ENCODE measurements at regions of chr12 and their contacts with region 1.

Region 1: DNA sequence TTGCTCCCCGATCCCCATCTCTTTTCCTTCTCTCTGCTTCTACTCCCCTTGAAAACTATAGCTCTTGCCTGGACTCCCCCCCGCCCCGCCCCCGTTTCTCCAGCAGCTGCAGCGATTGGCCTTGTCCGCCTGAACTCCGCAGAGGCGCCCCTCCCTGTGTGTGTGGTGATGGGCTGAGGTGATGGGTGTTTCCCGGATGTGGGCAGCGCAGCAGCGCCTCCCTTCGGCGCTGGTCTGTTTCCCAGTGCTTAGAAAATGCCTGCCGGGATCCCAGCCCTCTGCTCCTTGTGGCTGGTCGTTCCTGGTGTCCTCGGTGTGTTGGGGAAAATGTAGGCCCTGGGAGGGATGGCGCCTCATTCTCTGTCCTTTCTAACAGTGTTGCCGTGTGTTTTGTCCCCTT is 43.3 kb downstream of the GALNT8 start:
- DNase-seq: no peak
- H3K4me3 Mint-ChIP-seq: no peak overlapping the region
- H3K27ac Mint-ChIP-seq: no peak overlapping the region
- H3K4me1 Mint-ChIP-seq: no peaks in the 10 kb centered on the region
- H3K27me3 Mint-ChIP-seq: peaks cover 34% of the 10 kb centered on the region
- CTCF ChIP-seq: no peak

Region 2: DNA sequence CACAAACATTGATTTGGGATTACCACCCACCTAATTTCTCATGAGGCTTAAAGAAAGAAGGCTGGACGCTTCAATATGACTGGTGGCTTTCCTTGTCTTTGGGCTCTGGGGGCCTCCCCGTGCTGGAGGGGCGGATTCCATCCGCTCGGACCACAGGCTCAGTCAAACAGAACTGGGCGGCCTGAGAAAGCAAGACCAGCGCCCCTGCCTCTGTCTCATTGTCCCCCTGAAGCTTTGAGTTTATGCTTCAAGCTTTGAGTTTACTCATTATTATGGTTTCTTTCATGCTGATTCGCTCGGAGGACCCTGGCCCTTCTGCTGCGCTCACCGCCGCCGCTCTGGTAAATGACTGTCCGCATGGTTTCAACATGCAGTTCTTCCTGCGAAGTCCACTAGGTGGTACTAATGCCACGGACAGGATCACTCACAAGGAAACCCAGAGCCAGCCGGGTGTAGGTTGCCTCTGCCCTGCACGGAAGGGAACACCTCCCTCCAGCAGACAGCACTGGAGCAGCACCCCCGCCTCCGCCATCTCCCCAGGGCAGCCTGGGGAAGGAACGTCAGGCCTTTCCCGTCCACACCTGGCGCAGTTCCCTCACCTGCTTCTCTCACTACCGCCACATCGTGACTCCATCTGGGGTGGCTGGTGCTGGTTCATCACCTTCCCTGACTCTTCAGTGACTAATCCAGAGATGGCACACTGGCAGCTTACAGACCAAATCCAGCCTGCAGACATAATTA is 455.8 kb before region 1 on chr12:
- CTCF ChIA-PET with region 1: interaction called, 3 read pairs
- POLR2A ChIA-PET with region 1: no interaction called
- intact Hi-C with region 1: loop called (anchors 1 kb)
- DNase-seq: peak; percentile 88
- H3K4me3 Mint-ChIP-seq: peak overlapping the region; percentile 60
- H3K27ac Mint-ChIP-seq: peak overlapping the region; percentile 36
- H3K4me1 Mint-ChIP-seq: peaks cover 10% of the 10 kb centered on the region
- H3K27me3 Mint-ChIP-seq: peaks cover 12% of the 10 kb centered on the region
- CTCF ChIP-seq: peak; percentile 78

Region 3: GRCh38 chr12:4421590-4422031 is 341.9 kb before region 1 on chr12:
- CTCF ChIA-PET with region 1: interaction called, 4 read pairs
- POLR2A ChIA-PET with region 1: no interaction called
- intact Hi-C with region 1: loop called (anchors 1 kb)
- DNase-seq: peak; percentile 64
- H3K4me3 Mint-ChIP-seq: no peak overlapping the region
- H3K27ac Mint-ChIP-seq: no peak overlapping the region
- H3K4me1 Mint-ChIP-seq: peaks cover 5% of the 10 kb centered on the region
- H3K27me3 Mint-ChIP-seq: peaks cover 20% of the 10 kb centered on the region
- CTCF ChIP-seq: peak; percentile 49

Region 4: DNA sequence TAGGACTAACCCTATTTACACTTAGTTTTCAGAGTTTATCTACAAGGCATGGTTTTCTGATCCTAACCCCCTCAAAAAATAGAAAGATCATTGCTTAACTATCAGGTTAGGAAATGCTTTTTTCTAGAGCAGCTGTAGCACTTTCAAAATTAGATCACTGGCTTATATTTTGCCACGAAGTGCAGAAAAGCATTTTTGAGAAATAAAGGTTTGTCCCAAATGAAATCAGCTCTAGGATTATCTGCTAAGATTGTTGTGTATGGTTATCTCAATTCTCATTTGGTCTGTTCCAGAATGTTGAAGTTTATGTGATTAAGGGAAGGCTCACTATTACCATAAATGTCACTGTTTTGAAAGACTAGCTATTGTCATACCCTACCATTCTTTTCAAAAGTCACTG is 211.4 kb before region 1 on chr12:
- CTCF ChIA-PET with region 1: interaction called, 10 read pairs
- POLR2A ChIA-PET with region 1: no interaction called
- intact Hi-C with region 1: no loop called
- DNase-seq: no peak
- H3K4me3 Mint-ChIP-seq: no peak overlapping the region
- H3K27ac Mint-ChIP-seq: no peak overlapping the region
- H3K4me1 Mint-ChIP-seq: peaks cover 5% of the 10 kb centered on the region
- H3K27me3 Mint-ChIP-seq: no peaks in the 10 kb centered on the region
- CTCF ChIP-seq: no peak

Region 5: GRCh38 chr12:4604684-4605193 is 158.8 kb before region 1 on chr12:
- CTCF ChIA-PET with region 1: interaction called, 57 read pairs
- POLR2A ChIA-PET with region 1: no interaction called
- intact Hi-C with region 1: loop called (anchors 1 kb)
- DNase-seq: peak; percentile 88
- H3K4me3 Mint-ChIP-seq: peak overlapping the region; percentile 98
- H3K27ac Mint-ChIP-seq: peak overlapping the region; percentile 94
- H3K4me1 Mint-ChIP-seq: no peaks in the 10 kb centered on the region
- H3K27me3 Mint-ChIP-seq: peaks cover 44% of the 10 kb centered on the region
- CTCF ChIP-seq: peak; percentile 97

Region 6: DNA sequence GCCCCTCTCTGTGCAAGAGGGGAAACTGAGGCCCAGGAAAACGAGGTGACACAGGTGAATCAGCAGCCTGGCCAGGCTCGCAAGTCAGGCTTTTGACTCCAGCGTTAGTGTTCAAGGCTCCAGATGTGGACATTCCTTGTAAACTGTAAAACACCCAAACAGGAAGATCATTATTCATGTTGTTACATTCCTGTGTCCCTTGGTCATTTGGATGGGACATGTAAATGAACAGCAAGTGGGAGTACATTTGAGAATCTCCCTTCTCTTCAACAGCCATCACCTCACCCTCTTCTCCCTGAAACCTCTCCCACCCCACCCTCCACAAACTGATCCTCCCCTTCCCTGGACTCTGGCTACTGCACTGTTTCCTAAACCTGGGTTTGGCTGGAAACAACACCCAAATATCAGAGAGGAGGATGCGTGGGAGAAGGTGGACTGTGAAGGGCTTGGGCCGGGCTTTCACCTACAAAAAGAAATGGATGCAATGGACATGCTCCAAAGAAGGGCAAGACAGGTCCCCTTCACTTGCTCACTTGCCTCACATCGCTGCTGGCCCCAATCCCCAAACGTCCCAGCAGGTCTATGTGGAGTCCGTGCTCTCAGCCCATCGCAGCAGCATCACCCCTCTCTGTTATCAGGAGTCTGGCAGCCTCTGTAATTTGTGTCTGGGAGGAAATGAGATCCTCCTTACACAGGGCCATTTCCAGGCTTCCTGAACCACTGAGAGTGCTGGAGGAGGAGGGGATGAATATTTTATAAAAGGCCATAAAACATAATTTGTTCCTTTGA is 33.3 kb after region 1 on chr12:
- CTCF ChIA-PET with region 1: no interaction called
- POLR2A ChIA-PET with region 1: no interaction called
- intact Hi-C with region 1: no loop called
- DNase-seq: no peak
- H3K4me3 Mint-ChIP-seq: no peak overlapping the region
- H3K27ac Mint-ChIP-seq: no peak overlapping the region
- H3K4me1 Mint-ChIP-seq: no peaks in the 10 kb centered on the region
- H3K27me3 Mint-ChIP-seq: peaks cover 25% of the 10 kb centered on the region
- CTCF ChIP-seq: no peak

Region 7: GRCh38 chr12:4807116-4807783 is 43.7 kb after region 1 on chr12:
- CTCF ChIA-PET with region 1: no interaction called
- POLR2A ChIA-PET with region 1: no interaction called
- intact Hi-C with region 1: no loop called
- DNase-seq: no peak
- H3K4me3 Mint-ChIP-seq: no peak overlapping the region
- H3K27ac Mint-ChIP-seq: no peak overlapping the region
- H3K4me1 Mint-ChIP-seq: no peaks in the 10 kb centered on the region
- H3K27me3 Mint-ChIP-seq: peaks cover 13% of the 10 kb centered on the region
- CTCF ChIP-seq: no peak